A549 (cell line): ENCODE measurements at regions of chrX and their contacts with region 1.

Region 1: GRCh38 chrX:154013614-154014360 is 5.9 kb downstream of the IRAK1 start:
- DNase-seq: peak; percentile 42 to 64
- ATAC-seq: peak; percentile 65 to 84
- H3K4me3 ChIP-seq: no peak overlapping the region
- H3K27ac ChIP-seq: 0 out of 6 replicates have a peak overlapping the region, but pooled peaks have one; percentile 16 to 30
- H3K4me1 ChIP-seq: peaks cover 21% of the 10 kb centered on the region
- CTCF ChIP-seq: peak; percentile 76
- EP300 ChIP-seq: no peak
- POLR2A ChIP-seq: no peak
- RAD21 ChIP-seq: peak; percentile 49 to 50; a peak in 3 of 5 replicates

Region 2: DNA sequence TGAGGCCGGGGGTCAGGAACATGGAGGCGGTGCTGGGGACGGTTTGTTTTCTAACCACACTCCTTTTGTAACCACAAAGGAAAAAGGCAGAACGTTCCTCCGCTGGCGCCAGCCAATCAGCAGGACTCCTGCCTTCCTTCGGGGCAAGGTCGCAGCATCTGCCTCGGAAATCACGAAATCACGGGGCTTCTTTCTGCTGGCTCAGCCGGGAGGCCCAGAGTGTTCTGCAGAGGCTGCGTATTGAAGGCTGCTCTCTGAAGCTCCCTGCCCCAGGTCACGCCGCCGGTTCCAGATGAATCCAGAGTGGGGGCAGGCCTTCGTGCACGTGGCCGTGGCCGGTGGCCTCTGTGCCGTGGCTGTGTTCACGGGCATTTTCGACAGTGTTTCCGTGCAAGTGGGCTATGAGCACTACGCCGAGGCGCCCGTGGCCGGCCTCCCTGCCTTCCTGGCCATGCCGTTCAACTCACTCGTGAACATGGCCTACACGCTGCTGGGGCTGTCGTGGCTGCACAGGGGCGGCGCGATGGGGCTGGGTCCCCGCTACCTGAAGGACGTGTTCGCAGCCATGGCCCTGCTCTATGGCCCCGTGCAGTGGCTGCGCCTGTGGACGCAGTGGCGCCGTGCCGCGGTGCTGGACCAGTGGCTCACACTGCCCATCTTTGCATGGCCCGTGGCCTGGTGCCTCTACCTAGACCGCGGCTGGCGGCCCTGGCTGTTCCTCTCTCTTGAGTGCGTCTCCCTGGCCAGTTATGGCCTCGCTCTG is 31.8 kb before region 1 on chrX:
- CTCF ChIA-PET with region 1: interaction called, 15 read pairs
- POLR2A ChIA-PET with region 1: no interaction called
- DNase-seq: no peak
- ATAC-seq: no peak
- H3K4me3 ChIP-seq: no peak overlapping the region
- H3K27ac ChIP-seq: no peak overlapping the region
- H3K4me1 ChIP-seq: no peaks in the 10 kb centered on the region
- CTCF ChIP-seq: no peak
- EP300 ChIP-seq: no peak
- POLR2A ChIP-seq: no peak
- RAD21 ChIP-seq: no peak

Region 3: DNA sequence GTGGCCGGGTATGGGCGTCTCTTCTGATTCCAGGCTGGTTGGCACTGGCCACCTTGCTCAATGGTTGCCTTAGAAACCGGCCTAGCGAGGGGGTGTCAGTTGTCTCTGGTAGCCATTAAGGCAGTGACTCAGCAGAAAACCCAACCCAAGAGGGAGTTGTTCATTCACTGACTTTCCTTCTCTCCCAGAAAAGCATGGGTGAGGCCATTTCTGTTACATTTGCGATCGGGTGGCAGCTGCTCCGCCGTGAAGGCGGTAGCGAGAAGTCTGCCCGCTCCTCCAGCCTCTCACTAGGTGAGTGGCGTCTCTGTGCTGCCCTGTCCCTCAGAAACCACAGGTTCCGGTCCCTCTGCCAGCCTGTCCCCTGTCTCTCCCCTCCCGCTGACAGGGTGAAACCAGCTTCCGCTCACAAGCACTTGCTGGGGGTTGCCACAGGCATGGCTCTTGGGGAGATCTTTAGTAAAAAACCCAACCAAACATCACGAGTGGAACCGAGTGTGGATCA is 11.5 kb before region 1 on chrX:
- CTCF ChIA-PET with region 1: interaction called, 22 read pairs
- POLR2A ChIA-PET with region 1: no interaction called
- DNase-seq: peak in 1 of 2 experiments; percentile 70
- ATAC-seq: peak; percentile 27 to 65; a peak in 4 of 6 replicates
- H3K4me3 ChIP-seq: no peak overlapping the region
- H3K27ac ChIP-seq: peak overlapping the region; percentile 74 to 89
- H3K4me1 ChIP-seq: peaks cover 11% of the 10 kb centered on the region
- CTCF ChIP-seq: no peak
- EP300 ChIP-seq: no peak
- POLR2A ChIP-seq: no peak
- RAD21 ChIP-seq: no peak

Region 4: DNA sequence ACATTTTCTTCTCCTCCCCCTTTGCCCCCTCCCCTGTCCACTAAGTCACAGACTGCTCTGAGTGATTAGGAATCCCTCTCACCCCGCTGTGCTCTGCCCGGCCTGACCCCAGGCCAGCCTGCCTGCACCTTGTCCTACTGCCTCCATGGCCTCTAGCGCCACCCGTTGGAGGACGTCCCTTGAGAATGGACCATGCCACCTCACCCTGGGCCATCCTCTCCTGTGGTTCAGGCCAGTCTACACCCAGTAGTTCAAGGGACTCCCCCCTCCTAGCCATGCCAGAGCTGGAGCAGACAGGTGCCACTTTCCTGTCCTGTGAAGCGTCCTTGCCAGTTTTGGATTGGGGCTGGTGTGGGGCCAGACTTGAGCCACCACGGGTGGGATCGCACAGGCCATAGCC is 15.7 kb after region 1 on chrX:
- CTCF ChIA-PET with region 1: interaction called, 18 read pairs
- POLR2A ChIA-PET with region 1: no interaction called
- DNase-seq: peak in 1 of 2 experiments; percentile 21
- ATAC-seq: peak; percentile 48 to 61; a peak in 4 of 6 replicates
- H3K4me3 ChIP-seq: no peak overlapping the region
- H3K27ac ChIP-seq: no peak overlapping the region
- H3K4me1 ChIP-seq: no peaks in the 10 kb centered on the region
- CTCF ChIP-seq: no peak
- EP300 ChIP-seq: no peak
- POLR2A ChIP-seq: no peak
- RAD21 ChIP-seq: no peak

Region 5: GRCh38 chrX:154040307-154040756 is 26.5 kb after region 1 on chrX:
- CTCF ChIA-PET with region 1: interaction called, 14 read pairs
- POLR2A ChIA-PET with region 1: no interaction called
- DNase-seq: no peak
- ATAC-seq: peak; percentile 43 to 76; a peak in 5 of 6 replicates
- H3K4me3 ChIP-seq: no peak overlapping the region
- H3K27ac ChIP-seq: peak overlapping the region; percentile 61 to 67; a peak in 5 of 6 replicates
- H3K4me1 ChIP-seq: peaks cover 49% of the 10 kb centered on the region
- CTCF ChIP-seq: no peak
- EP300 ChIP-seq: no peak; a peak in 1 of 5 replicates
- POLR2A ChIP-seq: no peak
- RAD21 ChIP-seq: no peak

Region 6: GRCh38 chrX:154046031-154046781 is 32.4 kb after region 1 on chrX:
- CTCF ChIA-PET with region 1: interaction called, 14 read pairs
- POLR2A ChIA-PET with region 1: interaction called, 8 read pairs
- DNase-seq: peak; percentile 21 to 78
- ATAC-seq: peak; percentile 84 to 85
- H3K4me3 ChIP-seq: no peak overlapping the region
- H3K27ac ChIP-seq: peak overlapping the region; percentile 76 to 85
- H3K4me1 ChIP-seq: peaks cover 75% of the 10 kb centered on the region
- CTCF ChIP-seq: peak; percentile 17; the same call in 1 of the 3 replicates
- EP300 ChIP-seq: no peak
- POLR2A ChIP-seq: no peak
- RAD21 ChIP-seq: peak in 1 of 2 experiments; percentile 33; a peak in 2 of 5 replicates

Region 7: GRCh38 chrX:154051201-154051810 is 37.5 kb after region 1 on chrX:
- CTCF ChIA-PET with region 1: interaction called, 13 read pairs
- POLR2A ChIA-PET with region 1: interaction called, 8 read pairs
- DNase-seq: peak; percentile 51 to 52
- ATAC-seq: peak; percentile 77 to 82; a peak in 5 of 6 replicates
- H3K4me3 ChIP-seq: no peak overlapping the region
- H3K27ac ChIP-seq: no peak overlapping the region
- H3K4me1 ChIP-seq: peaks cover 37% of the 10 kb centered on the region
- CTCF ChIP-seq: peak; percentile 60
- EP300 ChIP-seq: no peak
- POLR2A ChIP-seq: no peak
- RAD21 ChIP-seq: peak; percentile 40 to 48; a peak in 4 of 5 replicates